ENCODE measurements at regions of chr11 and their contacts with region 1.

Region 1: GRCh38 chr11:128342511-128343134 is 244.7 kb downstream of the ETS1 start:
- DNase-seq: peak; percentile 61 to 92 (median 66)
- H3K4me3 ChIP-seq: peak overlapping the region in 1 of 2 donors; percentile 25
- H3K4me3 Mint-ChIP-seq: peak overlapping the region in 7 of 8 donors; percentile 64 to 90 (median 83)
- H3K27ac ChIP-seq: peak overlapping the region; percentile 85
- H3K27ac Mint-ChIP-seq: peak overlapping the region; percentile 96 to 100 (median 99)
- H3K4me1 ChIP-seq: peaks cover 87% of the 10 kb centered on the region
- H3K4me1 Mint-ChIP-seq: peaks cover 70 to 99% (median 86%) of the 10 kb centered on the region in 4 donors
- H3K27me3 ChIP-seq: no peaks in the 10 kb centered on the region
- H3K27me3 Mint-ChIP-seq: no peaks in the 10 kb centered on the region

Region 2: GRCh38 chr11:126989942-126990715 is 1352.5 kb before region 1 on chr11:
- CTCF ChIA-PET with region 1: no interaction called
- POLR2A ChIA-PET with region 1: no interaction called
- intact Hi-C with region 1: no loop called
- DNase-seq: peak in 4 of 5 donors; percentile 15 to 30 (median 18)
- H3K4me3 ChIP-seq: no peak overlapping the region
- H3K4me3 Mint-ChIP-seq: no peak overlapping the region
- H3K27ac ChIP-seq: no peak overlapping the region
- H3K27ac Mint-ChIP-seq: no peak overlapping the region
- H3K4me1 ChIP-seq: no peaks in the 10 kb centered on the region
- H3K4me1 Mint-ChIP-seq: no peaks in the 10 kb centered on the region
- H3K27me3 ChIP-seq: no peaks in the 10 kb centered on the region
- H3K27me3 Mint-ChIP-seq: peaks cover 1 to 6% of the 10 kb centered on the region in 2 donors

Region 3: DNA sequence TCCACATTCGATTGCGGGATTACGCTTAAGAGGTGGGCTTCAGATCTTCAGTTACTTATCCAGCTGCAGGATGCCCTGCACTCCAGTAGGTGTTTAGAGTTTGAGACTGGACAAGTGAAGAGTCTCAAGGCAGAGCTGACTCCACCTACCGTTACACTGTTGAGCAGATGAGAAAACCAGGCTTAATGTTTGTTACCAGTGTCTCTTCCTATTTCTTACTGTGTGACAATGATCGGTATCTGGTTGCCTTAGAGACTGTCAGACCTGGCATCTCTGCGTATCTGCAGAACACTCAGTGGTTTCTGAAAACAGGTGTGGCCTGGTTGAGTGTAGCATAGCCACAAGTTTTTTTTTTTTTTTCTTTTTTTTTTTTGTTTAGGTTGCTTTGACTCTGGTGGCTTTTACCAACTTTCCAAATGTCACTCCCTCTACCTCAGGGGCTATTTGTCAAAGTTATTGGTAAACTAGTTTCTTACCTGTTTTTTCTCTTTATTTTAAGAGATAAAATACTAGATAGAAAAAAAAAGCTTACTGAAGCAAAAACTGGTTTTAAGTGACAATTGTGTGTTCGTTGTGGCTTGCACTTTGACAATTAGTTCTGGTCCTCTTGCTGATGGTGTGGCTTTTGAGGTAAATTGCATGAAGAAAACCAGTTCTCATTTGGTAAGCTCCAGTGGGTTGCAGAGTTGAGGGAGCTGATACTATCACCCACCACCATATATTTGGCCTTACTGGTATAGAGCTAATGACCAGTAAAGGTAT is 40.0 kb before region 1 on chr11:
- CTCF ChIA-PET with region 1: interaction called, 13 read pairs
- POLR2A ChIA-PET with region 1: interaction called, 91 read pairs
- intact Hi-C with region 1: loop called (anchors 1 kb)
- DNase-seq: peak; percentile 88 to 96 (median 94)
- H3K4me3 ChIP-seq: peak overlapping the region; percentile 54 to 77
- H3K4me3 Mint-ChIP-seq: peak overlapping the region; percentile 90 to 95 (median 92)
- H3K27ac ChIP-seq: peak overlapping the region; percentile 93
- H3K27ac Mint-ChIP-seq: peak overlapping the region; percentile 95 to 100 (median 98)
- H3K4me1 ChIP-seq: peaks cover 98% of the 10 kb centered on the region
- H3K4me1 Mint-ChIP-seq: peaks cover 72 to 97% (median 86%) of the 10 kb centered on the region in 4 donors
- H3K27me3 ChIP-seq: no peaks in the 10 kb centered on the region
- H3K27me3 Mint-ChIP-seq: no peaks in the 10 kb centered on the region

Region 4: DNA sequence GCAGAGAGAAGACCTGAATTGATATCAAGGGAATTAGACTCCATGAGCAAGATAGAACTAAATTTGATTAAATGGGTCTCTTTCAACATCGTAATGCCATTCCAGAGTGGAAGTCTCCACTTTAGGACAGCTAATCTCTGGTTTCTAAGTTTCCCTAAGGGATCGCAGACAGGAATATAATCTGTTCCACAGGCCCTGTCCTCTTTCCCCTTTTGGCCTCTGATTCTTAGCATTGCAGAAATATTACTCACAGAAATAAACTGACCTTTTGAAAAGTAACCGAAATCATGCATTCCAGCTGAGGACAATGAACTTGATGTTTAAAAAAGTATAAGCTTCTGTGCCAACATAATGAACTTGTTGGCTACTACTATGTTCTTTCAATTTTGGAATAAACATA is 16.9 kb after region 1 on chr11:
- CTCF ChIA-PET with region 1: interaction called, 4 read pairs
- POLR2A ChIA-PET with region 1: interaction called, 20 read pairs
- intact Hi-C with region 1: no loop called
- DNase-seq: no peak
- H3K4me3 ChIP-seq: no peak overlapping the region
- H3K4me3 Mint-ChIP-seq: no peak overlapping the region
- H3K27ac ChIP-seq: no peak overlapping the region
- H3K27ac Mint-ChIP-seq: peak overlapping the region in 2 of 7 donors; percentile 29 to 76
- H3K4me1 ChIP-seq: peaks cover 13% of the 10 kb centered on the region
- H3K4me1 Mint-ChIP-seq: peaks cover 15 to 33% (median 27%) of the 10 kb centered on the region in 4 donors
- H3K27me3 ChIP-seq: no peaks in the 10 kb centered on the region
- H3K27me3 Mint-ChIP-seq: no peaks in the 10 kb centered on the region

Region 5: DNA sequence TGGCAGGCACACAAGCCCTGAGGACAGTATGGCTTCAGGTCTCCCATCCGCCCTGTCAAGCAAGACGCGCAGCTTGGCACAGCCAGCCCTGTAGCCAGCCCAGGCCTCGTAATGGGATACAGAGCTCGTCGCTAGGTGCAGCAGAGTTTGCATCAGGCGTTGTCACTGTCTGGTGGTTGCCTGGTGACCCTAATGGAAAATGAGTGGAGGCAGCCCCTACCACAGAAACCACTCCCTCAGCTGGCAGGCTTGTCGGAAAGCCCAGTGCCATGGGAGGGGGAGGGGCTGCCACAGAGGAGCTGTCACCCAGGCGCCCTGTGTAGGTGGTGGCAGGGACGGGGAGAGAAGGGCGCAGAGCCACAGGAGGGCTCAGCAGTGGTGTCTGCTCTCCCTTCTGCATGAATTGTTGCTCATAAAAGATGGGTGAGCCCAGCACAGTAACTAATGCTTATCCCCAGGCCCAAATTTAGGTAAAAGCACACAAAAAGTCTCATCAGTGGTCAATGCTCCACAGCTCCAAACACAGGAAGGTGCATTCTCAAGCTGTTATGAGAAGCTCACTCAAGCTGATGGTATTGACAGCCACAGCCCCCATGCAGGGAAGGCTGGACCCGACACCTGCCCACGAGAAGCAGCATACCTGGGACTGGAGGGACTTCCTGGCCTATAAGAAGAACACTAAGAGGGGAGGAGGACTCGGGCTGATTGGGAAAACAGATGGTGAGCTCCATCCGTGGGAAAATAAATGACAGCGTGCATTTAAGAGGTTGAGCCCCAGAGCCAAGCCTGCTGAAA is 80.2 kb after region 1 on chr11:
- CTCF ChIA-PET with region 1: no interaction called
- POLR2A ChIA-PET with region 1: interaction called, 19 read pairs
- intact Hi-C with region 1: no loop called
- DNase-seq: peak; percentile 84 to 95 (median 90)
- H3K4me3 ChIP-seq: peak overlapping the region in 1 of 2 donors; percentile 28
- H3K4me3 Mint-ChIP-seq: peak overlapping the region; percentile 48 to 81 (median 72)
- H3K27ac ChIP-seq: peak overlapping the region; percentile 50
- H3K27ac Mint-ChIP-seq: peak overlapping the region; percentile 97 to 100 (median 98)
- H3K4me1 ChIP-seq: peaks cover 26% of the 10 kb centered on the region
- H3K4me1 Mint-ChIP-seq: peaks cover 31 to 45% (median 40%) of the 10 kb centered on the region in 4 donors
- H3K27me3 ChIP-seq: no peaks in the 10 kb centered on the region
- H3K27me3 Mint-ChIP-seq: no peaks in the 10 kb centered on the region

Region 6: DNA sequence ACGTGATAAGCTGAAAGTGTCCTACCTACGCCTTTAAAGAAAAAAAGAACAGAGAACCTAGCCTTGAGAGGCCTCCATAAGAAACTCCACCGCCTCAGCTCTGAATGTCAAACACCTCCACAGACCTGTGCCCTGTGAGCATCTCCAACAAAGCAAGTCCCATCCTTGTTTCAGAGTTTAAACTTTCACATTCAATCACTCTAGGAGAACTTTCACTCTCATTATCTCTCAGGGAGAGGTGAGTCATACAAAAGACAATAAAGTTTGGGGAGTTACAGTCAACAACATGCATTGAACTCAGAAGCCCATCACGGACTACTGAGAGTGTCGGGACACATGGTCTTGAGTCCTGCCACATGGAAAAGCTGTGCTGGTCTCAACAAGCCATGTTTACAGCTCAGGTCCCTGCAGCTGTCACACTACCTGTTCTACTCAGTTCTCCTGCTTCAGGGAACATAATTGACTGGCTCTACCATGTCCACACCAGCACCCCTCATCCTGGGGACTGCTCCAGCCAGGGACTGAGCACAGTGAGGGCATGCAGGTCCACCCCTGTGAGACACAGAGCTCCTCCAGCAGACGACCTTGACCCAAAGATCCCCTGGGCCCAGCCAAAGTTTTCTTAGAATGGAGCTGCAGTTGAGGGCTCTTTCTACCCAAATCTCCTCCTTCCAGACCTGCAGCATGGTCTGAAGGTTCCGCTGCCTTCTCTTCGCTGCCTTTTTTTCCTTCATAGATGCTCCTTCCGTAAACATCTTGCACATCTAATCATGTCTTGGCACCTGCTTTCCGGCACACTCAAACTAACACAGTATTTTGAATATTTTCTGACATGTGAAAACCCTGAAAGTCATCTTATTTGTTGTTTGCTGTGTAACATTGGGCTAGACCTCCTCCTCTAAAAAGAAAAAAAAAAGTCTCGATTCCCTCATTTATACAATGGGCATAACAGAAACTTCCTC is 129.8 kb after region 1 on chr11:
- CTCF ChIA-PET with region 1: interaction called, 3 read pairs
- POLR2A ChIA-PET with region 1: interaction called, 38 read pairs
- intact Hi-C with region 1: no loop called
- DNase-seq: peak in 4 of 5 donors; percentile 51 to 82 (median 57)
- H3K4me3 ChIP-seq: peak overlapping the region; percentile 5 to 27
- H3K4me3 Mint-ChIP-seq: peak overlapping the region; percentile 70 to 93 (median 84)
- H3K27ac ChIP-seq: peak overlapping the region; percentile 94
- H3K27ac Mint-ChIP-seq: peak overlapping the region; percentile 98 to 99 (median 99)
- H3K4me1 ChIP-seq: peaks cover 100% of the 10 kb centered on the region
- H3K4me1 Mint-ChIP-seq: peaks cover 85 to 98% (median 92%) of the 10 kb centered on the region in 4 donors
- H3K27me3 ChIP-seq: no peaks in the 10 kb centered on the region
- H3K27me3 Mint-ChIP-seq: no peaks in the 10 kb centered on the region

Measured in CD4-positive, alpha-beta memory T cell (primary cell).